Mammary epithelial cell (primary cell): ENCODE measurements at regions of chr14 and their contacts with region 1.

Region 1: GRCh38 chr14:92093320-92093719 is 13.1 kb downstream of the ATXN3 start:
- DNase-seq: no peak
- H3K4me3 ChIP-seq: no peak overlapping the region
- H3K27ac ChIP-seq: no peak overlapping the region
- H3K4me1 ChIP-seq: no peaks in the 10 kb centered on the region
- H3K27me3 ChIP-seq: no peaks in the 10 kb centered on the region
- CTCF ChIP-seq: no peak

Region 2: GRCh38 chr14:92039719-92040430 is 53.4 kb before region 1 on chr14 and contains the start of gene TRIP11:
- CTCF ChIA-PET with region 1: no interaction called
- dilution Hi-C with region 1: no loop called
- in situ Hi-C with region 1: no loop called
- intact Hi-C with region 1: loop called (anchors 5 kb)
- DNase-seq: peak; percentile 90
- H3K4me3 ChIP-seq: peak within 1 kb of the TSS; percentile 72 to 80 (median 75)
- H3K27ac ChIP-seq: peak within 1 kb of the TSS; percentile 93
- H3K4me1 ChIP-seq: peaks cover 10% of the 10 kb centered on the region
- H3K27me3 ChIP-seq: no peaks in the 10 kb centered on the region
- CTCF ChIP-seq: no peak
- total RNA-seq, gene TRIP11: 38.8 to 46.9 TPM

Region 3: GRCh38 chr14:92135267-92135666 is 41.9 kb after region 1 on chr14:
- CTCF ChIA-PET with region 1: no interaction called
- dilution Hi-C with region 1: no loop called
- in situ Hi-C with region 1: no loop called
- intact Hi-C with region 1: no loop called
- DNase-seq: peak; percentile 4
- H3K4me3 ChIP-seq: no peak overlapping the region
- H3K27ac ChIP-seq: no peak overlapping the region
- H3K4me1 ChIP-seq: no peaks in the 10 kb centered on the region
- H3K27me3 ChIP-seq: no peaks in the 10 kb centered on the region
- CTCF ChIP-seq: peak; percentile 26 to 55